CD4-positive, alpha-beta T cell (primary cell): ENCODE measurements at regions of chrX and their contacts with region 1.

Region 1: GRCh38 chrX:24479924-24480323 is 14.8 kb downstream of the PDK3 start:
- DNase-seq: peak; percentile 46 to 94 (median 63)
- ATAC-seq: peak; percentile 96
- H3K4me3 ChIP-seq: peak overlapping the region; percentile 39
- H3K4me3 Mint-ChIP-seq: peak overlapping the region; percentile 79
- H3K27ac ChIP-seq: peak overlapping the region; percentile 79 to 91
- H3K27ac Mint-ChIP-seq: peak overlapping the region; percentile 87
- H3K4me1 ChIP-seq: peaks cover 51% of the 10 kb centered on the region
- H3K4me1 Mint-ChIP-seq: peaks cover 86% of the 10 kb centered on the region
- H3K27me3 ChIP-seq: no peaks in the 10 kb centered on the region
- H3K27me3 Mint-ChIP-seq: no peaks in the 10 kb centered on the region
- CTCF ChIP-seq: no peak

Region 2: DNA sequence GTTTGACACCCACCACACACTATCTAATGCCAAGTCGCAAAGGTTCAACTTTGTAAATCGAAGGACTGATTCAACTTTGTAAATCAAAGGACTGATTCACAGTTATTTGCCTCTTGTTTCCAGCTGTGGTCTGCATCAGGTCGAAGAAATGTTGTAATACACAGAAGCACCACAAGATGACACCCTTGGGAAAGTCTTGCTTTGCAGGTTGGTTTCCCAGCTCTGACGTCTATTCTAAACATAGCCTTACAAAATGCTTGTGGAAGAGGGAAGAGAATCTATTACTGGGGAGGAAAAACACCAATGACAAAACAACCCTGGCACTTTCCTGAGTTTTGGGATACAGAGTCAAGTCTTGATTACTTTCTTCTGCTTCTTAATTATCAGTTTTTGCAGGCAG is 84.1 kb before region 1 on chrX:
- CTCF ChIA-PET with region 1: interaction called, 5 read pairs
- POLR2A ChIA-PET with region 1: interaction called, 17 read pairs
- intact Hi-C with region 1: no loop called
- DNase-seq: peak in 12 of 14 experiments; percentile 4 to 81 (median 26)
- ATAC-seq: peak; percentile 77
- H3K4me3 ChIP-seq: no peak overlapping the region
- H3K4me3 Mint-ChIP-seq: no peak overlapping the region
- H3K27ac ChIP-seq: no peak overlapping the region
- H3K27ac Mint-ChIP-seq: no peak overlapping the region
- H3K4me1 ChIP-seq: no peaks in the 10 kb centered on the region
- H3K4me1 Mint-ChIP-seq: peaks cover 6% of the 10 kb centered on the region
- H3K27me3 ChIP-seq: peaks cover 0 to 2% of the 10 kb centered on the region in 2 experiments
- H3K27me3 Mint-ChIP-seq: no peaks in the 10 kb centered on the region
- CTCF ChIP-seq: peak; percentile 72

Region 3: GRCh38 chrX:24464836-24465531 is 14.9 kb before region 1 on chrX and contains the start of gene PDK3:
- CTCF ChIA-PET with region 1: interaction called, 4 read pairs
- POLR2A ChIA-PET with region 1: interaction called, 142 read pairs
- intact Hi-C with region 1: loop called (anchors 1 to 2 kb)
- DNase-seq: peak; percentile 81 to 95 (median 88)
- ATAC-seq: peak; percentile 94
- H3K4me3 ChIP-seq: peak within 1 kb of the TSS; percentile 89
- H3K4me3 Mint-ChIP-seq: peak within 1 kb of the TSS; percentile 88
- H3K27ac ChIP-seq: peak within 1 kb of the TSS; percentile 82 to 84
- H3K27ac Mint-ChIP-seq: peak within 1 kb of the TSS; percentile 95
- H3K4me1 ChIP-seq: peaks cover 18% of the 10 kb centered on the region
- H3K4me1 Mint-ChIP-seq: peaks cover 36% of the 10 kb centered on the region
- H3K27me3 ChIP-seq: no peaks in the 10 kb centered on the region
- H3K27me3 Mint-ChIP-seq: no peaks in the 10 kb centered on the region
- CTCF ChIP-seq: no peak
- total RNA-seq, gene PDK3: 12.5 to 12.6 TPM

Region 4: DNA sequence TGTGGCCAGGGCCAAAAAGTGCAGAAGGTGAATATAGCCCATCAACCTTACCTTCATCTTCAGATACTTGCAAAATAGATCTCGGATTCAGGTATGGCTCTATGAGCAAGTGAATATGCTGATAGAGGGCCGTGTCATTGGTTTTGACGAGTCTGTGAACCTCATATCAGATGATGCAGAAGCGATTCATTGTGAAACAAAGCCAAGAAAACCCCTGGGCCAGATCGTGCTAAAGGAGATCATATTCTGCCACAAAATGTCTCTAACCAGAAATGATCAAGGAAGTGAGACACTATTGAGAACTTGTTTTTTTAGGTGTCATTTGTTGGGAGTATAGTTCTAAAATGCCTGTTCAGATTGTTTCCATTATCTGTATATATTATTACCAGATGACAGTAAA is 33.5 kb after region 1 on chrX:
- CTCF ChIA-PET with region 1: no interaction called
- POLR2A ChIA-PET with region 1: no interaction called
- intact Hi-C with region 1: no loop called
- DNase-seq: no peak
- ATAC-seq: no peak
- H3K4me3 ChIP-seq: no peak overlapping the region
- H3K4me3 Mint-ChIP-seq: no peak overlapping the region
- H3K27ac ChIP-seq: no peak overlapping the region
- H3K27ac Mint-ChIP-seq: no peak overlapping the region
- H3K4me1 ChIP-seq: no peaks in the 10 kb centered on the region
- H3K4me1 Mint-ChIP-seq: no peaks in the 10 kb centered on the region
- H3K27me3 ChIP-seq: no peaks in the 10 kb centered on the region
- H3K27me3 Mint-ChIP-seq: no peaks in the 10 kb centered on the region
- CTCF ChIP-seq: no peak